Naive thymus-derived CD4-positive, alpha-beta T cell (primary cell): ENCODE measurements at regions of chr14 and their contacts with region 1.

Region 1: DNA sequence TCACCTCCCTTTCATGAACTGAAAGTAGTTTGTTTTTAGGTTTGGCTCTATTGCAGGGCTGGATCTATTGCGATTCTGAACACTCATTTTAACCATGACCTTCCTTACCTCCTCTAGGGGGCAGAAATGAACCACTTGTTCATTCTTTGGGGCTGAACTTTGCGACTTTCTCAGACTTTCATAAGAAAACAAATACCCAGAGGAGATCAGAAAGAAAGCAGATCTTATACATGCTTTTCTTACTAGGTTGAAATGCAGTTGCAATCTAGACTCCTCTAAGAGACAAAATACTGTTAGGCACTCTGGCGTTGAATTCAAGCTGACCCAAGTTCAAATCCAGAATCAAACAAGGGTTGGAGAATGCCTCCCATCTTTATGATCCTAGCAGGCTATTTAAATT is 32.6 kb upstream of the PLEKHG3 start:
- DNase-seq: peak in 7 of 9 donors; percentile 25 to 66 (median 50)
- ATAC-seq: peak; percentile 64
- H3K4me3 ChIP-seq: no peak overlapping the region
- H3K4me3 Mint-ChIP-seq: no peak overlapping the region
- H3K27ac ChIP-seq: no peak overlapping the region
- H3K27ac Mint-ChIP-seq: no peak overlapping the region
- H3K4me1 ChIP-seq: peaks cover 7 to 16% of the 10 kb centered on the region in 2 donors
- H3K4me1 Mint-ChIP-seq: peaks cover 9 to 38% (median 15%) of the 10 kb centered on the region in 7 donors
- H3K27me3 ChIP-seq: no peaks in the 10 kb centered on the region
- H3K27me3 Mint-ChIP-seq: peaks cover 0 to 26% (median 0%) of the 10 kb centered on the region in 5 donors

Region 2: GRCh38 chr14:64698903-64699302 is 27.3 kb after region 1 on chr14:
- CTCF ChIA-PET with region 1: interaction called, 3 read pairs
- POLR2A ChIA-PET with region 1: no interaction called
- intact Hi-C with region 1: loop called in 1 of 2 experiments (anchors 2 kb)
- DNase-seq: no peak
- ATAC-seq: peak; percentile 83
- H3K4me3 ChIP-seq: no peak overlapping the region
- H3K4me3 Mint-ChIP-seq: peak overlapping the region in 1 of 10 donors; percentile 44
- H3K27ac ChIP-seq: no peak overlapping the region
- H3K27ac Mint-ChIP-seq: peak overlapping the region in 1 of 9 donors; percentile 65
- H3K4me1 ChIP-seq: peaks cover 14 to 42% of the 10 kb centered on the region in 2 donors
- H3K4me1 Mint-ChIP-seq: peaks cover 15 to 57% (median 21%) of the 10 kb centered on the region in 7 donors
- H3K27me3 ChIP-seq: peaks cover 0 to 9% of the 10 kb centered on the region in 2 donors
- H3K27me3 Mint-ChIP-seq: peaks cover 31 to 88% (median 49%) of the 10 kb centered on the region in 5 donors

Region 3: GRCh38 chr14:64720131-64720576 is 48.6 kb after region 1 on chr14:
- CTCF ChIA-PET with region 1: interaction called, 3 read pairs
- POLR2A ChIA-PET with region 1: no interaction called
- intact Hi-C with region 1: loop called in 1 of 2 experiments (anchors 5 kb)
- DNase-seq: no peak
- ATAC-seq: peak; percentile 24
- H3K4me3 ChIP-seq: no peak overlapping the region
- H3K4me3 Mint-ChIP-seq: peak overlapping the region in 1 of 10 donors; percentile 13
- H3K27ac ChIP-seq: no peak overlapping the region
- H3K27ac Mint-ChIP-seq: peak overlapping the region in 3 of 9 donors; percentile 48 to 62 (median 56)
- H3K4me1 ChIP-seq: peaks cover 29 to 65% of the 10 kb centered on the region in 2 donors
- H3K4me1 Mint-ChIP-seq: peaks cover 35 to 88% (median 49%) of the 10 kb centered on the region in 7 donors
- H3K27me3 ChIP-seq: no peaks in the 10 kb centered on the region
- H3K27me3 Mint-ChIP-seq: peaks cover 0 to under 1% (median 0%) of the 10 kb centered on the region in 5 donors

Region 4: GRCh38 chr14:64764641-64765520 is 93.3 kb after region 1 on chr14:
- CTCF ChIA-PET with region 1: interaction called, 19 read pairs
- POLR2A ChIA-PET with region 1: no interaction called
- intact Hi-C with region 1: loop called (anchors 1 kb)
- DNase-seq: peak; percentile 33 to 71 (median 59)
- ATAC-seq: peak; percentile 86
- H3K4me3 ChIP-seq: peak overlapping the region; percentile 39
- H3K4me3 Mint-ChIP-seq: peak overlapping the region in 9 of 10 donors; percentile 36 to 78 (median 65)
- H3K27ac ChIP-seq: no peak overlapping the region
- H3K27ac Mint-ChIP-seq: peak overlapping the region in 3 of 9 donors; percentile 48 to 62 (median 49)
- H3K4me1 ChIP-seq: peaks cover 0 to 31% of the 10 kb centered on the region in 2 donors
- H3K4me1 Mint-ChIP-seq: peaks cover 2 to 44% (median 23%) of the 10 kb centered on the region in 7 donors
- H3K27me3 ChIP-seq: no peaks in the 10 kb centered on the region
- H3K27me3 Mint-ChIP-seq: peaks cover 0 to 21% (median 0%) of the 10 kb centered on the region in 5 donors